ENCODE measurements at regions of chr19 and their contacts with region 1.

Region 1: DNA sequence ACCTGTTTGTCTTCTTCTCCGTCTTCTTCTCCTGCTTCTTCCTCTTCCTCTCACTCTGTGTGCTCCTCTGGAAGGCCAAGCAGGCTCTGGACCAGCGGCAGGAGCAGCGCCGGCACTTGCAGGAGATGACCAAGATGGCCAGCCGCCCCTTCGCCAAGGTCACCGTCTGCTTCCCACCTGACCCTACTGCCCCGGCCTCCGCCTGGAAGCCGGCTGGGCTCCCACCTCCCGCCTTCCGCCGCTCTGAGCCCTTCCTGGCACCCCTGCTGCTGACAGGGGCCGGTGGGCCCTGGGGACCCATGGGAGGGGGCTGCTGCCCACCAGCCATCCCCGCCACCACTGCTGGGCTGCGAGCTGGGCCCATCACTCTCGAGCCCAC is 13.9 kb downstream of the CNFN start:
- DNase-seq: no peak
- H3K4me3 ChIP-seq: no peak overlapping the region
- H3K27ac ChIP-seq: no peak overlapping the region
- H3K4me1 ChIP-seq: no peaks in the 10 kb centered on the region
- H3K27me3 ChIP-seq: no peaks in the 10 kb centered on the region
- CTCF ChIP-seq: no peak

Region 2: DNA sequence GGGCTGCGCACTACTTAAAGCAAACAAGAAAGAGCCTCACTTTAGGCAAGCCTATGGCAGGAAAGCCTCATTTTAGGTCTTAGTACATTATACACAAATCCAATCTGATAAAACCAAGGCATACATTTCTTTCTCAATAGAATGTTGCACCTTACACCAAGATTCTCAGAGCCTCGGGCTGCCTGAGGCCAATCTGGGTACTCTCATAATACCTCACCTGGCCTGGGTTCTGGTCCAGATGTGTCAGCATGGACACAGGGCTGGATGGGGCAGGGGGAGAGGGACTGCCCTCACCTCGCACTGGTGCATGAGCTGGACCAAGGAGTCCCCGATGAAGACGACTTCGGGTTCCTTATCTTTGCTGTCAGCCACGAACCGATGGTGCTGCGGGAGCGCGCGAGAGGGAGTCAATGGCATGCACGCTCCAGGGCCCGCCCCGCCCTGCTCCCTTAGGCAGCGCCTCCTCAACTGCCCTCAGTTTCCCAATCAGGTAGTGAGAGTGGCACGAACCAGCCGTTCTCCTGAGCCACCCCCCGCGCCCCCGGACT is 74.4 kb before region 1 on chr19 and contains the start of gene PRR19:
- CTCF ChIA-PET with region 1: no interaction called
- POLR2A ChIA-PET with region 1: interaction called, 14 read pairs
- intact Hi-C with region 1: no loop called
- DNase-seq: peak; percentile 49
- H3K4me3 ChIP-seq: peak within 1 kb of the TSS; percentile 88
- H3K27ac ChIP-seq: peak within 1 kb of the TSS; percentile 80
- H3K4me1 ChIP-seq: peaks cover 15% of the 10 kb centered on the region
- H3K27me3 ChIP-seq: no peaks in the 10 kb centered on the region
- CTCF ChIP-seq: no peak
- total RNA-seq, gene PRR19: 2.5 and 3.6 TPM in 2 replicates

Region 3: DNA sequence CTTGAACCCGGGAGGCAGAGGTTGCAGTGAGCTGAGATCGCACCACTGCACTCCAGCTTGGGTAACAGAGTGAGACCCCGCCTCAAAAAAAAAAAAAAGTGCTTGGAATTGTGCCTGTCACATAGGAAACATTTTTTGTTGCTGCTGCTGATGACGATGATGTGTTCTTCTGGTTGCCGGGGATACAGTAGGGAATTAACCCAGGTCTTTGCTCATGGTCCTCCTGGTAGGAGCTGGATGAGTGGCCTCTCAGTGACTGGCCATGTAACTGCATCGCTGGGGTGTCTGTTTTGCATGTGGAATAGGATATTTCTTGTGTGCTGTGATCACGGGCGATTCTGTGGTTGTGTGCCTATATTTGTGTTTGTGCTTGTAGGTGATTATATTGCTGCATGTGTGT is 18.6 kb after region 1 on chr19:
- CTCF ChIA-PET with region 1: no interaction called
- POLR2A ChIA-PET with region 1: no interaction called
- intact Hi-C with region 1: no loop called
- DNase-seq: no peak
- H3K4me3 ChIP-seq: no peak overlapping the region
- H3K27ac ChIP-seq: no peak overlapping the region
- H3K4me1 ChIP-seq: peaks cover 10% of the 10 kb centered on the region
- H3K27me3 ChIP-seq: peaks cover 23% of the 10 kb centered on the region
- CTCF ChIP-seq: no peak

Measured in A673 (cell line).